Activated CD4-positive, alpha-beta T cell treated with anti-CD3 and anti-CD28 coated beads, Interleukin-2, amount 10 ng/mL, durations not matched to agents 7 days and 5 days (primary cell): ENCODE measurements at regions of chr12 and their contacts with region 1.

Region 1: GRCh38 chr12:52879394-52880351 is 25.2 kb downstream of the KRT8 start:
- DNase-seq: peak; percentile 75
- H3K4me3 Mint-ChIP-seq: peak overlapping the region; percentile 31
- H3K27ac Mint-ChIP-seq: no peak overlapping the region
- H3K4me1 Mint-ChIP-seq: peaks cover 10% of the 10 kb centered on the region
- H3K27me3 Mint-ChIP-seq: peaks cover 6% of the 10 kb centered on the region

Region 2: DNA sequence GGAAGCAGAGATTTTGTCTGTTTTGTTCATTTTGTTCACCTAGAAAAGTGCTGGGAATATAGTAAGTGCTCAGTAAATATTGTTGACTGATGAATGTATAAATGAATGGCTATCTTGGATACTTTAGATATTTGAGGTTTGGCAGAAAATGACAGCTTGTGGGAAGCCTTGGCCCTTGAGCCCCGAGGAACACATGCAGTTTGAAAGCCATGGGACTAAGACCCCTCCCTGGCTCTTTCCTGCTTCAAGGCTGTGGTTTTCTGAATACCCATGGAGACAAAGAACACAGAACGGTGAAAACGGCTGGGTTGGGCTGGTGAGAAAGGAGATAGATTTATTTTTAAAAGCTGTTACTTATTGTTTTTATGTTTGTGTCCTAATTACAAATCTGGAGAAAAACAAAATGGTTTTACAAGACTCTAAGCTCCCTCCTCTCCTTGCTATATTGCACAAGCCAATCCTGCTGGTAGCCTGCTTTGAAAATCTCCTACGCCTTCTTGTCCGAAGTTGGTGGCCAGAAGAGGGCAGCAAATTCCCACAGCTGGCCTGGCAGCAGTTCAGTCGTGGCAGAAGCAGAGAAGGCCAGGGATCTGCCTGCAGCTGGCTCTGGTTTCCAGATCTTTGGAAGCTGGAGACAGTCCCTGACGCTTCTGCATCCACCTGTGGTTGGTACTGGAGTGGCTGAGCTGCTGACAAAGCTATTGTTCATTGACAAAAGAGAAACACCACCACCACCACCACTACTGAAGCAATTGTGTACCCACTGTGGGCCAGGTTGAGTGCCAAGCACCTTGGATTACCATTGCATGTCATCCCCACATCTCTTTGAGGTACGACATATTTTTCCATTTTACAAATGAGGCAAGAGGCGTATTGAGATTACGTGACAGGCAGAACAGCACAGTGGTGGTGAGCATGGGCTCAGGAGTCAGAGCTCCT is 507.2 kb before region 1 on chr12:
- CTCF ChIA-PET with region 1: interaction called, 16 read pairs
- POLR2A ChIA-PET with region 1: no interaction called
- DNase-seq: peak; percentile 62
- H3K4me3 Mint-ChIP-seq: no peak overlapping the region
- H3K27ac Mint-ChIP-seq: no peak overlapping the region
- H3K4me1 Mint-ChIP-seq: no peaks in the 10 kb centered on the region
- H3K27me3 Mint-ChIP-seq: peaks cover 16% of the 10 kb centered on the region

Region 3: GRCh38 chr12:52582971-52583456 is 296.7 kb before region 1 on chr12:
- CTCF ChIA-PET with region 1: interaction called, 15 read pairs
- POLR2A ChIA-PET with region 1: interaction called, 3 read pairs
- DNase-seq: peak; percentile 76
- H3K4me3 Mint-ChIP-seq: no peak overlapping the region
- H3K27ac Mint-ChIP-seq: peak overlapping the region; percentile 62
- H3K4me1 Mint-ChIP-seq: peaks cover 53% of the 10 kb centered on the region
- H3K27me3 Mint-ChIP-seq: no peaks in the 10 kb centered on the region

Region 4: DNA sequence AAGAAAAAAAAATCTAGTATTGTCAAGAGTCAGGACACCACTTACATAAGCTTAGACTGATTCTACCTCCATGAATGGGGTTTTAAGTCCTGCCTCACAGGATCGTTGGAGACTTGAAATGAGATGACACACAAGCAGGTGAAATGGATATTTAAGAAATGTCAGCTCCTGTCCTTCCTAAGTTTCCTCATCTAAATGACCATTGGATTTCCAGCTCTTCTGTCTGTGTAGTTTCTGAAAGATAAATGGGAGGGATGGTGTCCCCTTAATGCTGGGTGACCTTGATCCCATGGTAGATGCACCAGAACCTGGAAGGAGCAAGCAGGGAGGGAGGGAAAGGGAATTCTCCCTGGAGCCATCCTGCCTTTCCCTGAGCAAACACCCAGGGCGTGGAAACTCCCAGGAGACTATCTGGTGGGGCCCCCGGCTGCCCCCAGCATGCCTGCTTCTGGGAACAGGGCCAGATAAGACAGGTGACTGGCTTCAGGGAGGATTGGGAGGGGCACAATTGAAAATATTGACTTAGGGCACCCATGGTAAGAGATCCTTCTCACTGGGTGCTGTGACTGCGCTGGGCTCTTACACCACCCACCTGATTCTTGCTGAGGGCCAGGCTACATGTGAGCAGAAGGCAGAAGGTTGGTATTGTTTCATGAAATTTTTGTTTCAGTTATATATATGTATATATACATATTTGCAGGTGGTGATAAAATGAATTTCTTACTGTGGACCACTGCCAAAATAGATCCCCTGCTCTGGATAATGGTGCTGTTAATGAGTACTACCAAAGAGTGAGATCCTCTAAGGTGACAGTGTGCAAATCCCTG is 15.6 kb after region 1 on chr12:
- CTCF ChIA-PET with region 1: interaction called, 19 read pairs
- POLR2A ChIA-PET with region 1: no interaction called
- DNase-seq: no peak
- H3K4me3 Mint-ChIP-seq: no peak overlapping the region
- H3K27ac Mint-ChIP-seq: no peak overlapping the region
- H3K4me1 Mint-ChIP-seq: no peaks in the 10 kb centered on the region
- H3K27me3 Mint-ChIP-seq: peaks cover 4% of the 10 kb centered on the region

Region 5: DNA sequence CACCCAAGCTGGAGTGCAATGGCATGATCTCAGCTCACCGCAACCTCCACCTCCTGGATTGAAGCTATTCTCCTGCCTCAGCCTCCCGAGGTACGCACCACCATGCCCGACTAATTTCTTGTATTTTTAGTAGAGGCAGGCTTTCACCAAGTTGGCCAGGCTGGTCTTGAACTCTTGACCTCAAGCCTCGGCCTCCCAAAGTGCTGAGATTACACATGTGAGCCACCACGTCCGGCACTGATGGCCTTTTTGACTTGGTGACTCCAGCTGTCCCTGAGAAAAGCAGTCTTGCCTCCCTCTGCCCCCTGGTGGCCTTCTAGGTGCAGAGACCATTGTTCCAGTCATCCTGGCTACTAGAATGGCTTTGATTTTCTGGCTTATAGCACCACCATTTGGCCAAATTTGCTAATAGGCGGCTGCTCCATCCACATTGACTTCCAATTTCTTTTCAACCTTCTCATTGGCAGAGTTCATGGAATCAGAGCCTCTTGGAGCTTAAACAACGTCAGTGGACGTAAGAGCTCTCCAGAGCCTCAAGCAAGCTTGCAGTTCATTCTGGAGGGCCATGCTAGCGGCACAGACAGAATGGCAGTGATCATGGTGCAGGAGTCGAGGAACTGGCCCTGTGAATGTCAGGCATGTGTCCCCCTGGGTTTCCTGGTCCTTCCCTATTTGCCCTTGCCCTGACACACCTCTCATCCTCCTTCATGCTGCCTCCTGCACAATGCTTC is 101.2 kb after region 1 on chr12:
- CTCF ChIA-PET with region 1: interaction called, 51 read pairs
- POLR2A ChIA-PET with region 1: no interaction called
- DNase-seq: peak; percentile 89
- H3K4me3 Mint-ChIP-seq: no peak overlapping the region
- H3K27ac Mint-ChIP-seq: no peak overlapping the region
- H3K4me1 Mint-ChIP-seq: no peaks in the 10 kb centered on the region
- H3K27me3 Mint-ChIP-seq: peaks cover 21% of the 10 kb centered on the region